ENCODE measurements at regions of chr12 and their contacts with region 1.

Region 1: DNA sequence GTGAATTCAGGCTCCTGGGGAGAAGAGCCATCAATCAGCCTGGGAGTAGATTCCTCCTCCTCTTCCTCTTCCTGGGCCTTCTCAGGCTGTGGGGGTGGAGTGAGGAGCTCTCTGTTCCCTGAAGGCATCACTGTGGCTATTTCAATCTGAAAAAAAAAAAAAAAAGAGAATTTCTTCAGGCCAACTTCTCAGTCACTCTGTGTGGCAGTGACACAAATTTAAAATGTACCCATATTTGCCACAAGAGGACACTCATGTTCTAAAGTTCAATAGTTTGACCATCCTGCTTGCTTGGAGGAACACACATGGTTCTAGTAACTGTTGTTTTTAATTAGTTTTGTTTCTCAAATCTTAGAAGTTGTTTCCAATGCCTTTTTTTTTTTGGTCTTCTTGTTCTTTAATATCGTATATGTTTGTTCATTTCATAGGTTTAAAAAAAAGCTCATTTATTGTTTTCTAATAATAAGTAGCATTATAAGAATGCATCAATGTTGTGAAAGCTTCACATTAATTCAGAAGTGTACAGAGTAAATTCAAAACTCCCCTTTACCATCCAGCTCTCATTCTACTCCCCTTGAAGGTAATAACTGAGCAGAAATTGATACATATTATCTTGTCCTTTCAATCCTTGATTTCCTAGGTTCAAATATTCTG is 23.3 kb upstream of the CCER1 start:
- DNase-seq: no peak
- ATAC-seq: peak; percentile 92

Region 2: DNA sequence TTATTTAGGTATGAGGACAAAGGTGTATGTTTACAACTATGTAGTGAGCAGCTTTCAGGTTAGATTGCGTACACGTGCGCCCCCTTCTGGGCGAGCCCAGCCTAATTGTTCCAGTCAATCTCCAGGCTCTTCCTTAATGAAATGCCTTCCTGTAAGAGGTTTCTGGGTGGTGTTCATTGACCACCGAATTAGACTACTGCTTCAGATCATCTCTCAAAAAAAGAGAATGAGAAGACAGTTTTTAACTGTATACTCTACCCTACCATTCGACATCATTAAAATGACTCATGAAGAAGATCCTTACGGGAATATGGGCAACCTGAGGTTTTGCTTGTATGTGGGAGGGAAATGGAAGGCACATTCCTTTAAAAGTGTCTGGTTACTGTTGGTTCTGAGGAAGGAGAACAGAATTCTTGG is 130.9 kb after region 1 on chr12:
- intact Hi-C with region 1: loop called (anchors 5 kb)
- DNase-seq: peak; percentile 87
- ATAC-seq: peak; percentile 82

Region 3: DNA sequence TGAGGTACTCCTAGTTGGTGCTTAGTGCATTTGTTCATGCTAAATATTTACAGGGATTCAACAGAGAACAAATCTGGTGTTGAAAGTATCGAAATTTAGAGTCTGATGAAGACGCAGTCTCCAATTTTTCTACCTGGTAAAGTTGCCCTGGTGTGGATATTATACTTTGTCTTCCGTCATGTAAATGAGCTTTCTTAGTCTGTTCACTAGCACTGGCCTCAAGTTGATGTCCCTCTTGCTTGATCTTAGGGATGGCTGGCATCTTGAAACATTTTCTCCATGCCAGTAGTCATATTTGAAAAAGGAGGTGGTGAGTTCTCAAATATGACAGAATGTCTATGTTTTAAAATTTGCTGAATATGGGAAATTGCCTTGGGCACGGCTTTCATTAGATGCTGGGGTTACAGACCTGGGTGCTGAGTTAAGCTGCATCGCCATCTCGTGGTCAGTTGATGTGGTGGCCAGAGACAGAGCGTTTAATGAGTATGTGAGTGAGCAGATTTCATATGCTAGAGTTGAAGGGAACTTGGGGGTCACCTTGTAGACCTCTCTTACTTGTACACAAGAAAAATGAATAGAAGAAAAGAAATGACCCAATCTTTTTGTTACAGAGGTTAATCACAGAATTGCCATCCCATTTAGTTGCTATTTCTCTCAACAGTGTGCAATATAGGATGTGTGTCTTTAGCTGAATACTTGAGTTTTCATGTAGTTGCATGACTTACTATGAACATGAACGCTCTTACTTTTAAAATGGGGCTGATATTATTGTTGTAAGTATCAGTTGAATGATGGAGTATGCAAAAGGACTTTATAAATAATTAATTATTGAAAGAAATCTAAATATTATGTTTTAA is 377.1 kb after region 1 on chr12:
- intact Hi-C with region 1: loop called (anchors 10 kb)
- DNase-seq: peak; percentile 67
- ATAC-seq: peak; percentile 98